B cell (primary cell): ENCODE measurements at regions of chr5 and their contacts with region 1.

Region 1: GRCh38 chr5:155616779-155617392 is 603.3 kb downstream of the KIF4B start:
- DNase-seq: peak; percentile 27
- ATAC-seq: no peak
- H3K4me3 ChIP-seq: no peak overlapping the region
- H3K4me3 Mint-ChIP-seq: no peak overlapping the region
- H3K27ac ChIP-seq: no peak overlapping the region
- H3K27ac Mint-ChIP-seq: no peak overlapping the region
- H3K4me1 ChIP-seq: no peaks in the 10 kb centered on the region
- H3K4me1 Mint-ChIP-seq: no peaks in the 10 kb centered on the region
- H3K27me3 ChIP-seq: peaks cover 0 to 3% (median 0%) of the 10 kb centered on the region in 4 experiments
- H3K27me3 Mint-ChIP-seq: peaks cover 17% of the 10 kb centered on the region
- CTCF ChIP-seq: peak; percentile 67

Region 2: DNA sequence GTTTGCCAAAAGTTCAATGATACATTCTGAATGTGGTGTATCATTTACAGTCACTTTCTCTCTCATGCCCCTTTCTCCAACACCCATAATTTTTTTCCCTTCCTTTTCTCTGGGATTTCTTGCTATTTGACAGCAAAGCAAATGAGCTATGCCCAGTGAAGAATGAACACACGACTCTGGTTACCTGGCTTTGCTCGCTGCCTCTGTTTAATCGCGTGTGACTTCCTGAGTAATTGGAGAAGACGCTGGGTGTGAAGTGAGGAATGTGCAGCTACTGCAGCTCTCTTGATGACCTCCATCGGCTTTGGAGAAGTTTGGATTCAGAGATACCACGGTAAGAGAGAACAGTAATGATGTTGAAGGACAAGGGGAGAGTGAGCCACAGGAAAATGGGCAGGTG is 48.5 kb after region 1 on chr5:
- CTCF ChIA-PET with region 1: no interaction called
- POLR2A ChIA-PET with region 1: no interaction called
- intact Hi-C with region 1: no loop called
- DNase-seq: no peak
- ATAC-seq: no peak
- H3K4me3 ChIP-seq: no peak overlapping the region
- H3K4me3 Mint-ChIP-seq: no peak overlapping the region
- H3K27ac ChIP-seq: no peak overlapping the region
- H3K27ac Mint-ChIP-seq: no peak overlapping the region
- H3K4me1 ChIP-seq: no peaks in the 10 kb centered on the region
- H3K4me1 Mint-ChIP-seq: no peaks in the 10 kb centered on the region
- H3K27me3 ChIP-seq: no peaks in the 10 kb centered on the region
- H3K27me3 Mint-ChIP-seq: no peaks in the 10 kb centered on the region
- CTCF ChIP-seq: no peak

Region 3: DNA sequence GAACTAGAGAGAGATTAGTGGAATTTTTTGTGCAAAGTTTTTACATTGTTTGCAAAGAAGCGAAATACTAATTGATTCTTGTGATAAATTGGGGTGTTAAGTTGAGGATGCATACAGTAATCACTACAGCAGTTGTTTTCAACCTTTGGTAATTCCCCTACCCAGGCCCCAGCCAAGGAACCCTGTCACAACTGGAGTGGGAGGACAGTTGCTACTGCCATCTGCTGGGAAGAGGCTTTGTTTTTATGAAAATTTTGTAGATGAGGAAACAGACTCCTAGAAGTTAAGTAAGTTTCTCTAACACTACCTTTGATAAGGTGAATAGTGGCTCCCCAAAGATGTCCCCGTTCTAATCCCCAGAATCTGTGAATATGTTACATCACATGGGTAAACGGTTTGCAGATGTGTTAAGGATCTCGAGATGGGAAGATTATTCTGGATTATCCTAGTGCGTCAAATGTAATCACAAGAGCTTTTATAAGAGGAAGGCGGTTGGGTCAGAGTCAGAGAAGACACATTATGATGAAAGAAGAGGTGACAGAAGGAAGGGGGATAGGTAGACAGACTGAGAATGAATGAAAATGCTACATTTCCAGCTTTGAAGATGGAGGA is 1199.2 kb after region 1 on chr5:
- CTCF ChIA-PET with region 1: no interaction called
- POLR2A ChIA-PET with region 1: no interaction called
- intact Hi-C with region 1: loop called (anchors 5 kb)
- DNase-seq: peak; percentile 15
- ATAC-seq: no peak
- H3K4me3 ChIP-seq: no peak overlapping the region
- H3K4me3 Mint-ChIP-seq: no peak overlapping the region
- H3K27ac ChIP-seq: no peak overlapping the region
- H3K27ac Mint-ChIP-seq: no peak overlapping the region
- H3K4me1 ChIP-seq: no peaks in the 10 kb centered on the region
- H3K4me1 Mint-ChIP-seq: no peaks in the 10 kb centered on the region
- H3K27me3 ChIP-seq: no peaks in the 10 kb centered on the region
- H3K27me3 Mint-ChIP-seq: peaks cover 13% of the 10 kb centered on the region
- CTCF ChIP-seq: no peak